ENCODE measurements at regions of chr14 and their contacts with region 1.

Region 1: GRCh38 chr14:103087343-103087835 is 3.4 kb downstream of the LBHD2 start:
- DNase-seq: no peak
- H3K4me3 Mint-ChIP-seq: no peak overlapping the region
- H3K27ac Mint-ChIP-seq: no peak overlapping the region
- H3K4me1 Mint-ChIP-seq: peaks cover 3% of the 10 kb centered on the region
- H3K27me3 Mint-ChIP-seq: peaks cover 58% of the 10 kb centered on the region

Region 2: GRCh38 chr14:103031956-103032355 is 55.4 kb before region 1 on chr14:
- CTCF ChIA-PET with region 1: no interaction called
- DNase-seq: no peak
- H3K4me3 Mint-ChIP-seq: no peak overlapping the region
- H3K27ac Mint-ChIP-seq: no peak overlapping the region
- H3K4me1 Mint-ChIP-seq: no peaks in the 10 kb centered on the region
- H3K27me3 Mint-ChIP-seq: no peaks in the 10 kb centered on the region

Region 3: GRCh38 chr14:103074699-103075355 is 12.6 kb before region 1 on chr14:
- CTCF ChIA-PET with region 1: interaction called, 11 read pairs
- DNase-seq: peak; percentile 42
- H3K4me3 Mint-ChIP-seq: no peak overlapping the region
- H3K27ac Mint-ChIP-seq: no peak overlapping the region
- H3K4me1 Mint-ChIP-seq: no peaks in the 10 kb centered on the region
- H3K27me3 Mint-ChIP-seq: peaks cover 41% of the 10 kb centered on the region